ENCODE measurements at regions of chr16 and their contacts with region 1.

Region 1: GRCh38 chr16:56608043-56608875 is at the start of gene MT2A:
- DNase-seq: peak; percentile 97
- H3K4me3 ChIP-seq: peak within 1 kb of the TSS; percentile 61 to 67 (median 64)
- H3K27ac ChIP-seq: peak within 1 kb of the TSS; percentile 89 to 98 (median 97)
- H3K4me1 ChIP-seq: peaks cover 47 to 51% of the 10 kb centered on the region in 2 donors
- H3K27me3 ChIP-seq: no peaks in the 10 kb centered on the region
- CTCF ChIP-seq: no peak
- POLR2A ChIP-seq: peak; percentile 45 to 94
- total RNA-seq, gene MT2A: 42.8 to 285 (median 54.6) TPM

Region 2: GRCh38 chr16:56300891-56301850 is 307.1 kb before region 1 on chr16:
- intact Hi-C with region 1: no loop called
- DNase-seq: peak in 1 of 2 donors; percentile 14
- H3K4me3 ChIP-seq: no peak overlapping the region
- H3K27ac ChIP-seq: peak overlapping the region in 1 of 3 donors; percentile 65
- H3K4me1 ChIP-seq: peaks cover 17 to 29% of the 10 kb centered on the region in 2 donors
- H3K27me3 ChIP-seq: no peaks in the 10 kb centered on the region
- CTCF ChIP-seq: no peak
- POLR2A ChIP-seq: no peak

Region 3: DNA sequence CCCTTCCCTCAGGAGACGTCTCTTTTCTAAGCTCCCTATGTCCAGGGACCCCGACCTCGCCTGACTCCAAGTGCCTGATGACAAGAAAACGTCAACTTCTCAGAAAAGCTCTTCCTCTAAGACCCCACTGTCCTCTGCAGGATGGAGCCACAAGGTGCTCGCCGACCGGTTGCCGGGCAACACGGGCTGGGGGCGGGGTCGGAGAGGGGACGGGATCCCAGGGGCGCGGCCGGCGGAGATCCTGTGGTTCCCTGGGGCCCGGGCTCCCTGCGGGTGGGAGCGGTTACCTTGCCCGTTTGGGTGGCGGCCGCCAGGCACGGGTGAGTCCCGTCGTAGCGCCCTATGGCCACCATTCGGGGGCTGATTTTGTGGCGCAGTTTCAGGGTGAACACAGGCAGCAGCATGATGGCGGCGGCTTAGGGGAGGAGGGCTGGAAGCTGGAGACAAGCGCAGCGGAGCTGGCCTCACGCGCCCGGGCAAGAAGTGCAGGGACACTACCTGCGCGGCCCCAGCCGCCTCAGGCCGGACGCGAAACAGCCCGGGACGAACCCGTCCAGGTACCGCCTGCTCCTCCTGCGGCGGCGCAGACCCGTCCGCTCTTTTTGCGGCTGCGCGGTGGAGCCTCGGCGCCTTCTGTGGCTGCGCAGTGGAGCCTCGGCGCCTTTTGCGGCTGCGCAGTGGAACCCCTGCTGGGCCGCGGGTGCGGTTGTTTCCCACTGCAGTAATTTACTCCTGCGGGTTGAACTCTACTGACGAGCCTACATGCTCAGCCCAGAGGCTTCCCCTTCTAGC is 88.6 kb before region 1 on chr16 and contains the start of gene BBS2:
- intact Hi-C with region 1: loop called (anchors 10 kb)
- DNase-seq: peak; percentile 92 to 93
- H3K4me3 ChIP-seq: peak within 1 kb of the TSS; percentile 78 to 89 (median 86)
- H3K27ac ChIP-seq: peak within 1 kb of the TSS; percentile 86 to 89 (median 89)
- H3K4me1 ChIP-seq: peaks cover 16 to 30% of the 10 kb centered on the region in 2 donors
- H3K27me3 ChIP-seq: no peaks in the 10 kb centered on the region
- CTCF ChIP-seq: peak in 4 of 6 experiments; percentile 2 to 26 (median 10)
- POLR2A ChIP-seq: peak in 1 of 2 donors; percentile 89
- total RNA-seq, gene BBS2: 55.1 to 98.6 (median 57.4) TPM

Region 4: GRCh38 chr16:56569801-56570370 is 38.4 kb before region 1 on chr16:
- intact Hi-C with region 1: no loop called
- DNase-seq: no peak
- H3K4me3 ChIP-seq: no peak overlapping the region
- H3K27ac ChIP-seq: no peak overlapping the region
- H3K4me1 ChIP-seq: no peaks in the 10 kb centered on the region
- H3K27me3 ChIP-seq: no peaks in the 10 kb centered on the region
- CTCF ChIP-seq: no peak
- POLR2A ChIP-seq: no peak

Region 5: GRCh38 chr16:56689171-56689570 is 80.9 kb after region 1 on chr16:
- intact Hi-C with region 1: loop called (anchors 5 kb)
- DNase-seq: no peak
- H3K4me3 ChIP-seq: no peak overlapping the region
- H3K27ac ChIP-seq: no peak overlapping the region
- H3K4me1 ChIP-seq: peaks cover 17 to 34% of the 10 kb centered on the region in 2 donors
- H3K27me3 ChIP-seq: no peaks in the 10 kb centered on the region
- CTCF ChIP-seq: no peak
- POLR2A ChIP-seq: no peak

Measured in thyroid gland (tissue), 4 donors.